ENCODE measurements at regions of chr13 and their contacts with region 1.

Region 1: DNA sequence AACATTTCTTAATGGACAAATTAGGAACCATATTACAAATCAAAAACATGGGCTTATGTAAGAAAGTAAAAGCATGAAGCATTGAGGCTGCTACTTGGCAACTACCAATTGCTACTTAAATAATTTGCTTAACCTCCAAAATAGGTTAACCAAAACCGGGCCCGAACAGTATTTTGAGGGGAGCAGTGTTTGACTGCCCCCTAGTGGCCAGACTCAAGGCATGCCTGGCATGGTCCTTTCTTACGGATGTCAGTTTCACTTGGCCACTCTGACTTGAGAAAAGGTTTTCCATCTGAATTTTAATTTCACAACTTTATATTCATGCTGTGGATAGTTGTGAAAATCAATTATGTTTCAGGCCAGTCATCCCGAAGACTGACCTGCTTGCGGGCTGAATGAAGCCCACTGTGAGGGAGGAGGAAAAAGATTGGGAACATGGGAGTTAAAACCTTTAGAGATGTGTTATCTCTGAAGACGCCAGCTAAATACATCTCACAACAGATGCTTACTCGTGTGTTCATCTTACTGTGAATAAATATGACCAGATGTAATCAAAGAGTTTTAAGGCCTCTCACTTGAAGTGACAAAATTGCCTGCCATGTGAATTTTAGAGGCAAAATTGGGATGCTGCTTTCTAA is 2.9 kb downstream of the RXFP2 start:
- DNase-seq: peak; percentile 55 to 69 (median 60)
- ATAC-seq: peak; percentile 60
- H3K4me3 ChIP-seq: no peak overlapping the region
- H3K27ac ChIP-seq: no peak overlapping the region
- H3K4me1 ChIP-seq: no peaks in the 10 kb centered on the region
- H3K27me3 ChIP-seq: peaks cover 0 to 3% of the 10 kb centered on the region in 2 donors
- CTCF ChIP-seq: peak; percentile 77 to 99 (median 83)
- POLR2A ChIP-seq: no peak

Region 2: GRCh38 chr13:31431722-31432137 is 310.5 kb before region 1 on chr13:
- intact Hi-C with region 1: loop called (anchors 10 kb)
- DNase-seq: peak; percentile 44 to 67 (median 52)
- ATAC-seq: peak; percentile 27
- H3K4me3 ChIP-seq: no peak overlapping the region
- H3K27ac ChIP-seq: no peak overlapping the region
- H3K4me1 ChIP-seq: no peaks in the 10 kb centered on the region
- H3K27me3 ChIP-seq: no peaks in the 10 kb centered on the region
- CTCF ChIP-seq: peak; percentile 40 to 86 (median 53)
- POLR2A ChIP-seq: no peak

Measured in body of pancreas (tissue), 4 donors.